ENCODE measurements at regions of chr18 and their contacts with region 1.

Region 1: DNA sequence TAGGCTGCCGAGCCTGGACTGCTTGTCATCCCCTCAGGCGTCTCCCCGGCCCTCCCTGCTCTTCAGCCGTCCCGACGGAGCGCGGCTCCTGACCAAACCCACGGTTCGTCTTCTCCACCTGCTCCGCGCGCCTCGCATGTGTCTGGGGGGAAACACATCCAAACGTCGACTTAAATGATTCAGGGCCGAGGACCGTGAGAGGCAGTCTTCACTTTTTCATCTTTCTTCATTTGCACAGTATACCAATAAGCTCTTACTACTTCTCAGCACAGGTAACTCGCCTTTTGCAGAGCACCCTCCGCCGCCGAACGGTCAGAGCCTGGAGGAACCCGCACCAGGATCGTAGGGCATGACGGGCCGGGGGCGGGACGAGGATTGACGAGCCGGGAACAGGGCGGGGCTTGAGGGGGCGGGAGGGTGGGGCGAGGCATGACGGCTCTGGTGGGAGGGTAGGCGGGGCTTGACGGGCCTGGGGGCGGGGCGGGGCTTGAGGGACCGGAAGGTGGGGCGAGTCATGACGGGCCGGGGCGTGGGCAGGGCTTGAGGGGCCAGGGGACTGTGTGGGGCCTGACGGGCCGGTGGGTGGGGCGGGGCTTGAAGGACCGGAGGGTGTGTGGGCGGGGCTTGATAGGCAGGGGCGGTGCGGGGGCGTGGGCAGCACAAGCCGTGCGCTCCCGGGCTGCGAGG is at the start of gene SEH1L:
- DNase-seq: peak; percentile 81

Region 2: GRCh38 chr18:12408247-12408869 is 539.1 kb before region 1 on chr18:
- in situ Hi-C with region 1: loop called (anchors 25 kb)
- DNase-seq: peak; percentile 49

Region 3: DNA sequence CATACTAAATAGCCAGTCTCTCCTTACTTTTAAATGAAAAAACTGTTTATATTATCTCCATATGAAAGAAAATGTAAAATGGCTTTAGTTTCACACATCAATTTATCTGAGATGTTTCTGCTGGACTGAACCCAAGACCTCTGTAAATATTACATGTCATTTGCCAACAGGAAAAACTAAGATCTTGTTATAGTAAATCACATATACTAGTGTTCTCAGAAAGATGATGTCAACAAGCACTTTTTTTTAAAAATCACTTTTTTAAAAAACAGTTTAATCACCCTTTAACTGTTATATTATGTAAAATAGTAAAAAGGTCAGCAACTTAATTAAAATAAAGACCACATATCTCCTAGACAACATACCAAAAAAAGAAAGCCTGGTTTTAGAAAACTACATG is 109.8 kb before region 1 on chr18:
- in situ Hi-C with region 1: no loop called
- DNase-seq: no peak